HEK293 (cell line): ENCODE measurements at regions of chr11 and their contacts with region 1.

Region 1: GRCh38 chr11:123707606-123708205 is 33.8 kb downstream of the ZNF202 start:
- H3K4me3 ChIP-seq: no peak overlapping the region
- H3K27ac ChIP-seq: no peak overlapping the region
- H3K4me1 ChIP-seq: no peaks in the 10 kb centered on the region
- CTCF ChIP-seq: peak; percentile 9; the same call in 1 of the 2 replicates

Region 2: GRCh38 chr11:123580557-123581275 is 127.0 kb before region 1 on chr11:
- CTCF ChIA-PET with region 1: interaction called, 50 read pairs
- POLR2A ChIA-PET with region 1: no interaction called
- H3K4me3 ChIP-seq: no peak overlapping the region
- H3K27ac ChIP-seq: no peak overlapping the region
- H3K4me1 ChIP-seq: no peaks in the 10 kb centered on the region
- CTCF ChIP-seq: peak; percentile 96

Region 3: GRCh38 chr11:123640677-123641494 is 66.8 kb before region 1 on chr11:
- CTCF ChIA-PET with region 1: interaction called, 310 read pairs
- POLR2A ChIA-PET with region 1: no interaction called
- H3K4me3 ChIP-seq: no peak overlapping the region
- H3K27ac ChIP-seq: no peak overlapping the region
- H3K4me1 ChIP-seq: no peaks in the 10 kb centered on the region
- CTCF ChIP-seq: peak; percentile 67; the same call in 1 of the 2 replicates

Region 4: GRCh38 chr11:123681030-123681429 is 26.7 kb before region 1 on chr11:
- CTCF ChIA-PET with region 1: interaction called, 12 read pairs
- POLR2A ChIA-PET with region 1: no interaction called
- H3K4me3 ChIP-seq: no peak overlapping the region
- H3K27ac ChIP-seq: no peak overlapping the region
- H3K4me1 ChIP-seq: no peaks in the 10 kb centered on the region
- CTCF ChIP-seq: no peak

Region 5: DNA sequence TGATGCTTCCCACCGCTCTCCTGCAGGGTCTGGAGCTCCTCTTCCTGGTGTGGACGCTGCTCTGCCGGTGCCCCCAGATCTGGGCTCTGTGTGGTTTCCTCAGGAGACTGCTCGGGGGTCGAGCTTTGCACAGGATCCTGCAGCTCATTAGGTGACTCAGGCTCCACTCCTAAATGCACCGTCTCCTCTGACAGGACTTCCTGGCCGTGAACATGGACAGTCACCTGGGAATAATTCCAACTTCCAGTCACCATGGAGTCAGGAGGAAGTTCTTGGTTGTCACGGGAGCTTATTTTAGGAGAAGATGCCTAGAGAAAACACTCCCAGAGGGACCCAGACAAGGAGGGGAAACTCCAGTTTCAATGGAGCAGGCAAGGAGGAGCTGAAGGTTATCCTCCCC is 21.9 kb after region 1 on chr11:
- CTCF ChIA-PET with region 1: interaction called, 15 read pairs
- POLR2A ChIA-PET with region 1: no interaction called
- H3K4me3 ChIP-seq: no peak overlapping the region
- H3K27ac ChIP-seq: no peak overlapping the region
- H3K4me1 ChIP-seq: no peaks in the 10 kb centered on the region
- CTCF ChIP-seq: no peak